Right cardiac atrium (tissue), 5 donors: ENCODE measurements at regions of chr2 and their contacts with region 1.

Region 1: DNA sequence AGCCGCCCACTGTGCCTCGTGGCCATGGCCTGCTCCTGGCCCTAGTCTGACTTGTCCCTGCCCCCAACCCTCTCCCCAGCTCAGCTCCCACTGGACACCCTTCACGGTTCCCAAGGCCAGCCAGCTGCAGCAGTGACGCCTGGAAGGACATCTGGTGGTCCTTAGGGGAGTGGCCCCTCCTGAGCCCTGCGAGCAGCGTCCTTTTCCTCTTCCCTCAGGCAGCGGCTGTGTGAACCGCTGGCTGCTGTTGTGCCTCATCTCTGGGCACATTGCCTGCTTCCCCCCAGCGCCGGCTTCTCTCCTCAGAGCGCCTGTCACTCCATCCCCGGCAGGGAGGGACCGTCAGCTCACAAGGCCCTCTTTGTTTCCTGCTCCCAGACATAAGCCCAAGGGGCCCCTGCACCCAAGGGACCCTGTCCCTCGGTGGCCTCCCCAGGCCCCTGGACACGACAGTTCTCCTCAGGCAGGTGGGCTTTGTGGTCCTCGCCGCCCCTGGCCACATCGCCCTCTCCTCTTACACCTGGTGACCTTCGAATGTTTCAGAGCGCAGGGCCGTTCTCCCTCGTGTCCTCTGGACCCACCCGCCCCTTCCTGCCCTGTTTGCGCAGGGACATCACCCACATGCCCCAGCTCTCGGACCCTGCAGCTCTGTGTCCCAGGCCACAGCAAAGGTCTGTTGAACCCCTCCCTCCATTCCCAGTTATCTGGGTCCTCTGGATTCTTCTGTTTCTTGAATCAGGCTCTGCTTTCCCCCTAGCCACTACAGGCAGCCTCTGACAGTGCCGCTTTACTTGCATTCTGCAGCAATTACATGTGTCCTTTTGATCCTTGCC is 35.8 kb downstream of the ANO7 start:
- DNase-seq: peak; percentile 57 to 79 (median 76)
- ATAC-seq: peak; percentile 42 to 43
- H3K4me3 ChIP-seq: no peak overlapping the region
- H3K27ac ChIP-seq: no peak overlapping the region
- H3K4me1 ChIP-seq: peaks cover 3% of the 10 kb centered on the region
- H3K27me3 ChIP-seq: no peaks in the 10 kb centered on the region

Region 2: GRCh38 chr2:241339839-241340630 is 115.8 kb after region 1 on chr2:
- intact Hi-C with region 1: loop called in 1 of 4 experiments (anchors 10 kb)
- DNase-seq: no peak
- ATAC-seq: no peak
- H3K4me3 ChIP-seq: no peak overlapping the region
- H3K27ac ChIP-seq: no peak overlapping the region
- H3K4me1 ChIP-seq: no peaks in the 10 kb centered on the region
- H3K27me3 ChIP-seq: no peaks in the 10 kb centered on the region